MCF 10A (cell line): ENCODE measurements at regions of chr13 and their contacts with region 1.

Region 1: GRCh38 chr13:99436686-99437416 is 64.4 kb upstream of the TM9SF2 start:
- DNase-seq: peak; percentile 81
- H3K4me3 Mint-ChIP-seq: peak overlapping the region; percentile 70
- H3K27ac Mint-ChIP-seq: no peak overlapping the region
- H3K4me1 Mint-ChIP-seq: peaks cover 18% of the 10 kb centered on the region
- H3K27me3 Mint-ChIP-seq: peaks cover 19% of the 10 kb centered on the region
- CTCF ChIP-seq: peak; percentile 100

Region 2: GRCh38 chr13:99200432-99201167 is 236.3 kb before region 1 on chr13 and contains the start of gene UBAC2:
- CTCF ChIA-PET with region 1: interaction called, 14 read pairs
- POLR2A ChIA-PET with region 1: no interaction called
- intact Hi-C with region 1: no loop called
- DNase-seq: peak; percentile 96
- H3K4me3 Mint-ChIP-seq: peak within 1 kb of the TSS; percentile 94
- H3K27ac Mint-ChIP-seq: peak within 1 kb of the TSS; percentile 97
- H3K4me1 Mint-ChIP-seq: peaks cover 38% of the 10 kb centered on the region
- H3K27me3 Mint-ChIP-seq: no peaks in the 10 kb centered on the region
- CTCF ChIP-seq: no peak
- total RNA-seq, gene UBAC2: 74.7 and 78.3 TPM in 2 replicates

Region 3: DNA sequence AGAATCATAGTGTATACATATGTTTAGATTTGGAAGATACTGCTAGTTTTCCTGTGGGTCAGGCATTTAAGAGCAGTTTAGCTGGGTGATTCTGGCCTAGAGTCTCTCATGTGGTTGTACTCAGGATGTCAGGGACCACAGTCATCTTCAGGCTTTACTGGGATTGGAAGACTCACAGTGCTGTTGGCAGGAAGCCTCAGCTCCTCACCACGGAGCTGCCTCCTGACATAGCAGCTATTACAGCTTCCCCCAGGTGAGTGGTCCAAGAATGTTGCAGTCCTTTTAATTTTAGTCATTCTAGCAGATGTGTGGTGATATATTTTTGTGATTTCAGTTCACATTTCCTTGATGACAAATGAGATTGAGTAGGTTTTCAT is 161.8 kb before region 1 on chr13:
- CTCF ChIA-PET with region 1: interaction called, 167 read pairs
- POLR2A ChIA-PET with region 1: no interaction called
- intact Hi-C with region 1: no loop called
- DNase-seq: peak; percentile 14
- H3K4me3 Mint-ChIP-seq: no peak overlapping the region
- H3K27ac Mint-ChIP-seq: no peak overlapping the region
- H3K4me1 Mint-ChIP-seq: peaks cover 14% of the 10 kb centered on the region
- H3K27me3 Mint-ChIP-seq: no peaks in the 10 kb centered on the region
- CTCF ChIP-seq: no peak

Region 4: DNA sequence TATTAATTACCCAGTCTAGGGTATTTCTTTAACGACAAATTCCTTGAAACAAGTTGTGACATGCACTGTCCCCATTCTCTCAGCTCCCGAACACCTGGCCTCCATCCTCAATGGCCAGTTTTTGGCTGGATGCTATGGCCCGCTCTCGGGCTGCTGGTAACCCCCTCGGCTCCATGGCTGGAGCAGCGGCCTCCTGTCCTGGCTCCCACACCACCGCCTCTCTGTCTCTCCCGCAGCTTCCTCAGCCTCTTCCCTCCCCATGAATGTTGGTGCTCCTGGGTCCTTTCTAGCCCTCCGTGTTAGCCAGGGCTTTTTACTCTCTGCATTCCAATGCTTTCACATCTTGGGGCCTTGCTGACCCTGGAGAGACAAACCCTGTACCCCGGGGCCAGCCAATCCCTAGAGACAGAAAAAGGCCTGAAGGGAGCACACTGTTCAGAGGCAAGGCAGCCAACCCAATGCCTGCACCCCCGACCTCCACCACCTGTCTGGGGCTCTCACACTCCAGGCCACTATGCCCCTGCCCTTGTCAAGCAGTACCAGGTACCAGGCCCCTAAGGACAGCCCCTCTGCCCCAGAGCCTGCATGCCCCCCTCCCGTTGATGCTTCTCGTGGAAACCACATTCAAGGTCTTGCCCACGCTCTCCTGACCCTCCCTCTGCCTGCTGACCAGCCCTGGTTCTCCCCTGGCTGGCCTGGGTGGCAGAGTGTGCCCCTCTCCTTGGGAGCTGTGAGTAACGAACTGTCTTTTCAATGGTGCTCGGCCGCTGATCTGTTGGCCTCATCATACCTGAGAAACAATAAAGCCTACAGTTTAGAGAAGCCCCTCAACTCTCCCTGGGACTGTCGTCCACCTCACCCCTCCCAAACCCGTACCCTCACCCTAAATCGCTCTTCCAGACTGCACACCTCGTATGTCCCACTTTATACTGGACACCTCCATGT is 42.8 kb before region 1 on chr13:
- CTCF ChIA-PET with region 1: interaction called, 10 read pairs
- POLR2A ChIA-PET with region 1: no interaction called
- intact Hi-C with region 1: no loop called
- DNase-seq: no peak
- H3K4me3 Mint-ChIP-seq: no peak overlapping the region
- H3K27ac Mint-ChIP-seq: no peak overlapping the region
- H3K4me1 Mint-ChIP-seq: no peaks in the 10 kb centered on the region
- H3K27me3 Mint-ChIP-seq: no peaks in the 10 kb centered on the region
- CTCF ChIP-seq: no peak

Region 5: GRCh38 chr13:99425485-99426341 is 11.1 kb before region 1 on chr13:
- CTCF ChIA-PET with region 1: interaction called, 32 read pairs
- POLR2A ChIA-PET with region 1: no interaction called
- intact Hi-C with region 1: no loop called
- DNase-seq: no peak
- H3K4me3 Mint-ChIP-seq: no peak overlapping the region
- H3K27ac Mint-ChIP-seq: no peak overlapping the region
- H3K4me1 Mint-ChIP-seq: no peaks in the 10 kb centered on the region
- H3K27me3 Mint-ChIP-seq: peaks cover 66% of the 10 kb centered on the region
- CTCF ChIP-seq: no peak

Region 6: DNA sequence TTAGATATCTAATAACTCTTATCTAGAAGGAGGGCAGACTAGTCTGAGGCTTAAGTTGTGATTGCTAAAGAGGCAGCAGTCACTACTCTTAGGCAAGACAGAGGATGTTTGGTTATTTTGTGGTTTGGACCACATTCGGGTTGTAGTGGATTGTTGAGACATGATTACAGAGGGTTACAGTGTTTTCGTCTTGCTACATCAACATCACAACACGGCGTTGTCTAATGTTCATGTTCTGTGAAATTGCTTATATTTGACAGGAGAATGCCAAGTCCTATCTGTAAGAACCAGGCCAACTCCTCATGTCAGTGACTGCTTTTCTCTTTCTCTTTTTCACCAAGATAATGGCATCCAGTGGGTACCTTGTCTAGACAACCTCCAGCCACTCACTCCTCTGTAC is 47.6 kb after region 1 on chr13:
- CTCF ChIA-PET with region 1: interaction called, 11 read pairs
- POLR2A ChIA-PET with region 1: no interaction called
- intact Hi-C with region 1: no loop called
- DNase-seq: peak; percentile 77
- H3K4me3 Mint-ChIP-seq: no peak overlapping the region
- H3K27ac Mint-ChIP-seq: peak overlapping the region; percentile 65
- H3K4me1 Mint-ChIP-seq: peaks cover 13% of the 10 kb centered on the region
- H3K27me3 Mint-ChIP-seq: no peaks in the 10 kb centered on the region
- CTCF ChIP-seq: no peak

Region 7: GRCh38 chr13:100361504-100361903 is 924.7 kb after region 1 on chr13:
- CTCF ChIA-PET with region 1: no interaction called
- POLR2A ChIA-PET with region 1: no interaction called
- intact Hi-C with region 1: no loop called
- DNase-seq: peak; percentile 85
- H3K4me3 Mint-ChIP-seq: no peak overlapping the region
- H3K27ac Mint-ChIP-seq: peak overlapping the region; percentile 71
- H3K4me1 Mint-ChIP-seq: peaks cover 22% of the 10 kb centered on the region
- H3K27me3 Mint-ChIP-seq: no peaks in the 10 kb centered on the region
- CTCF ChIP-seq: no peak